IMR-90 (cell line): ENCODE measurements at regions of chr20 and their contacts with region 1.

Region 1: GRCh38 chr20:50165684-50166554 is 12.4 kb upstream of the PEDS1 start:
- DNase-seq: peak; percentile 100
- ATAC-seq: peak; percentile 89
- H3K4me3 ChIP-seq: peak overlapping the region; percentile 45
- H3K27ac ChIP-seq: peak overlapping the region; percentile 94
- H3K4me1 ChIP-seq: peaks cover 8% of the 10 kb centered on the region
- H3K27me3 ChIP-seq: no peaks in the 10 kb centered on the region
- CTCF ChIP-seq: no peak
- POLR2A ChIP-seq: peak; percentile 87
- RAD21 ChIP-seq: peak; percentile 13; the same call in 1 of the 2 replicates

Region 2: GRCh38 chr20:49982346-49983122 is 183.4 kb before region 1 on chr20 and contains the start of gene SNAI1:
- CTCF ChIA-PET with region 1: interaction called, 5 read pairs
- POLR2A ChIA-PET with region 1: no interaction called
- dilution Hi-C with region 1: no loop called
- in situ Hi-C with region 1: no loop called
- intact Hi-C with region 1: loop called (anchors 2 kb)
- DNase-seq: peak; percentile 86
- ATAC-seq: peak; percentile 79
- H3K4me3 ChIP-seq: peak within 1 kb of the TSS; percentile 92
- H3K27ac ChIP-seq: peak within 1 kb of the TSS; percentile 80
- H3K4me1 ChIP-seq: peaks cover 23% of the 10 kb centered on the region
- H3K27me3 ChIP-seq: no peaks in the 10 kb centered on the region
- CTCF ChIP-seq: peak; percentile 52
- POLR2A ChIP-seq: peak; percentile 99
- RAD21 ChIP-seq: peak; percentile 39
- total RNA-seq, gene SNAI1: 0.54 and 0.83 TPM in 2 replicates

Region 3: DNA sequence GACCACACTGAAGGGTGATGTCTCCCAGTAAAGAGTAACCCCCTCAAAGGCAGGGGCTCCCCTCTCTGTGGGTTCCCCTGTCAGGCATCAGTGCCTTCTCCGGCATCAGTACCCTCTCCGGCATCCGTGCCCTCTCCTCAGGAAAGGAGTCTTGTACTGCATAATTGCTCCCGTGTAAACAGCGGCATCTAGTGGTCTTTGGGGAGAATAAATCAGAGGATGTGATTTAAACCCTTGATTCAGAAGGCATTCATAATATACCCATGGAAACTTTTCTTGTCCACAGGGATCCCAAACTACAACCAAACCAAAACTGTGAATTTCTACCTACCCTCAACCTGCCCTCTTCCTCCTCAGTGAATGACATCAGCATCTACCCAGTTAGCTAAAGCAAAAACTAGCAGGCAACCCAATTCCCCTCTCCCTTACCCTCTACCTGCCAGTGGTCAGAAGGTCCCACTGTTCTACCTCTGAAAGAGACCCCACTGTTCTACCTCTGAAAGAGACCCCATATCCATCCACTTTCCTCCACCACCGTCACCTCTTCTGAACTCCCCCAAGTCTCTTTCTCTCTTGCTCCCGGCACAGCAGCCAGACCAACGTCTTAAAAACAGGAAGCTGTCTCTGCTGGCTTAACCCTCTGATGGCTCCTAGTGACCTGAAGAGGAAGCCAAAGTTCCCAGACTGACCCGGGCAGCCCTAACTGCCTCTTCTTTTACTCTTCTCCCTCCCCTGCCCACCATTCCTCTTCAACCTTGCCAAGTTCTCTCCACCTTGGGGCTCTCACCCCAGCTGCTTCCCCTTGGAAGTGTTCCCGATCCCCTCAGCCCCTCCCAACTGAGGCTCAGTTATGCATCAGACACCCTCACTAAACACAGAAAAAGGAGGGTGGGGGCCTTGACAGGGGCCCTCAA is 80.2 kb before region 1 on chr20:
- CTCF ChIA-PET with region 1: no interaction called
- POLR2A ChIA-PET with region 1: interaction called, 3 read pairs
- dilution Hi-C with region 1: no loop called
- in situ Hi-C with region 1: no loop called
- intact Hi-C with region 1: loop called (anchors 5 kb)
- DNase-seq: peak; percentile 73
- ATAC-seq: peak; percentile 89
- H3K4me3 ChIP-seq: no peak overlapping the region
- H3K27ac ChIP-seq: peak overlapping the region; percentile 8; the same call in 1 of the 2 replicates
- H3K4me1 ChIP-seq: peaks cover 17% of the 10 kb centered on the region
- H3K27me3 ChIP-seq: no peaks in the 10 kb centered on the region
- CTCF ChIP-seq: peak; percentile 84
- POLR2A ChIP-seq: no peak
- RAD21 ChIP-seq: peak; percentile 78

Region 4: GRCh38 chr20:50120897-50121693 is 44.8 kb before region 1 on chr20:
- CTCF ChIA-PET with region 1: interaction called, 19 read pairs
- POLR2A ChIA-PET with region 1: interaction called, 3 read pairs
- dilution Hi-C with region 1: no loop called
- in situ Hi-C with region 1: no loop called
- intact Hi-C with region 1: loop called (anchors 1 kb)
- DNase-seq: peak; percentile 65
- ATAC-seq: peak; percentile 74
- H3K4me3 ChIP-seq: no peak overlapping the region
- H3K27ac ChIP-seq: no peak overlapping the region
- H3K4me1 ChIP-seq: peaks cover 5% of the 10 kb centered on the region
- H3K27me3 ChIP-seq: no peaks in the 10 kb centered on the region
- CTCF ChIP-seq: peak; percentile 69
- POLR2A ChIP-seq: no peak
- RAD21 ChIP-seq: peak; percentile 88

Region 5: DNA sequence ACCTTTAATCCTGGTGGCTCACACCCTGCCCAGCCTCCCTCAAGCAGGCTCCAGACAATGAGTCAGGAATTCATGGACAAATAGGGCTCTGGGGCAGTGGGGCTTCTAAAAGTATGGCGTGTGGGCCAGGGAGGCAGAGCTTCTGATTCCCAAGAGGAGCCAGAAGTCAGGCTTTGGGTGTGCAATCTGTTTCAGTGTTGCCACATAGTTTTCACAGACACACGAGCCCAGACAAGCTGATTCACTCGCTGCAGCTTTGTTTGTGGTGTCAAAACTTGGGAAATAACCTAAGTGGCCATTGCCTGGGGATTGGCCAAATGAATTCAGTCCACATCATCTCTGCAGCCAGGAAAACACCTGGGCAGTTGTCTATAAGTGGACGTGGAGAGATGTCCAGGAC is 21.6 kb before region 1 on chr20:
- CTCF ChIA-PET with region 1: no interaction called
- POLR2A ChIA-PET with region 1: interaction called, 6 read pairs
- dilution Hi-C with region 1: no loop called
- in situ Hi-C with region 1: no loop called
- intact Hi-C with region 1: loop called (anchors 1 kb)
- DNase-seq: peak; percentile 99
- ATAC-seq: peak; percentile 86
- H3K4me3 ChIP-seq: no peak overlapping the region
- H3K27ac ChIP-seq: peak overlapping the region; percentile 50; the same call in 1 of the 2 replicates
- H3K4me1 ChIP-seq: peaks cover 30% of the 10 kb centered on the region
- H3K27me3 ChIP-seq: no peaks in the 10 kb centered on the region
- CTCF ChIP-seq: no peak
- POLR2A ChIP-seq: no peak; the same call in 1 of the 2 replicates
- RAD21 ChIP-seq: 0 out of 2 replicates have a peak, but pooled peaks have one; percentile 7

Region 6: GRCh38 chr20:50153485-50154377 is 12.2 kb before region 1 on chr20 and contains the start of gene PEDS1:
- CTCF ChIA-PET with region 1: no interaction called
- POLR2A ChIA-PET with region 1: no interaction called
- dilution Hi-C with region 1: no loop called
- in situ Hi-C with region 1: no loop called
- intact Hi-C with region 1: loop called (anchors 1 kb)
- DNase-seq: peak; percentile 90
- ATAC-seq: peak; percentile 98
- H3K4me3 ChIP-seq: peak within 1 kb of the TSS; percentile 87
- H3K27ac ChIP-seq: peak within 1 kb of the TSS; percentile 83
- H3K4me1 ChIP-seq: peaks cover 22% of the 10 kb centered on the region
- H3K27me3 ChIP-seq: no peaks in the 10 kb centered on the region
- CTCF ChIP-seq: no peak
- POLR2A ChIP-seq: peak; percentile 93
- RAD21 ChIP-seq: no peak
- total RNA-seq, gene PEDS1: 24.0 and 25.3 TPM in 2 replicates

Region 7: GRCh38 chr20:50237349-50238085 is 71.6 kb after region 1 on chr20:
- CTCF ChIA-PET with region 1: no interaction called
- POLR2A ChIA-PET with region 1: no interaction called
- dilution Hi-C with region 1: no loop called
- in situ Hi-C with region 1: no loop called
- intact Hi-C with region 1: no loop called
- DNase-seq: no peak
- ATAC-seq: no peak
- H3K4me3 ChIP-seq: no peak overlapping the region
- H3K27ac ChIP-seq: no peak overlapping the region
- H3K4me1 ChIP-seq: peaks cover 4% of the 10 kb centered on the region; the same call in 1 of the 2 replicates
- H3K27me3 ChIP-seq: no peaks in the 10 kb centered on the region
- CTCF ChIP-seq: no peak
- POLR2A ChIP-seq: no peak
- RAD21 ChIP-seq: no peak

Region 8: DNA sequence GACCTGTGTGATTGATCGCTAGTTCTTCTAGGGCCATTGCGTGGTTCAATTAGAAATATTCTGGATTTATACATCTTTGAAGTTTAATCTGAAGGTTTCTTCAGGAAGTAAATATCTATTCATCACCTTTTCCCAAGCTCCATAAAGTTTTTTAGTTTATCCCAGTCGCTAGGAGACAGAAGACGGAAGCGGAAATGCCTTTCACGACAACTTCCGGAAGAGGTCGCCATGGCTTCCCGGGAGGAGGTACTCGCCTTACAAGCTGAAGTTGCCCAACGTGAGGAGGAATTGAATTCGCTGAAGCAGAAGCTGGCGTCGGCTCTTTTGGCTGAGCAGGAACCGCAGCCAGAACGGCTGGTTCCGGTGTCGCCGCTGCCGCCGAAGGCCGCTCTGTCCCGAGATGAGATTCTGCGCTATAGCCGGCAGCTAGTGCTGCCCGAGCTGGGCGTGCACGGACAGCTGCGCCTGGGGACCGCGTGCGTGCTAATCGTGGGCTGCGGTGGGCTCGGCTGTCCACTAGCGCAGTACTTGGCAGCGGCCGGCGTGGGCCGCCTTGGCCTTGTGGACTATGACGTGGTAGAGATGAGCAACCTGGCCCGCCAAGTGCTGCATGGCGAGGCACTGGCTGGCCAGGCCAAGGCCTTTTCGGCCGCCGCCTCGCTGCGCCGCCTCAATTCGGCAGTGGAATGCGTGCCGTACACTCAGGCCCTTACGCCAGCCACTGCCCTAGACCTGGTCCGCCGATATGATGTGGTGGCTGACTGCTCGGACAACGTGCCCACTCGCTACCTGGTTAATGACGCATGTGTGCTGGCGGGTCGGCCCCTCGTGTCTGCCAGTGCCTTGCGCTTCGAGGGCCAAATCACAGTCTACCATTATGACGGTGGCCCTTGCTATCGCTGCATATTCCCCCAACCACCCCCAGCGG is 793.0 kb after region 1 on chr20 and contains the start of gene MOCS3:
- CTCF ChIA-PET with region 1: no interaction called
- POLR2A ChIA-PET with region 1: interaction called, 12 read pairs
- dilution Hi-C with region 1: no loop called
- in situ Hi-C with region 1: no loop called
- intact Hi-C with region 1: no loop called
- DNase-seq: peak; percentile 93
- ATAC-seq: peak; percentile 83
- H3K4me3 ChIP-seq: peak within 1 kb of the TSS; percentile 91
- H3K27ac ChIP-seq: peak within 1 kb of the TSS; percentile 93
- H3K4me1 ChIP-seq: peaks cover 10% of the 10 kb centered on the region
- H3K27me3 ChIP-seq: no peaks in the 10 kb centered on the region
- CTCF ChIP-seq: 0 out of 2 replicates have a peak, but pooled peaks have one; percentile 0
- POLR2A ChIP-seq: peak; percentile 78; the same call in 1 of the 2 replicates
- RAD21 ChIP-seq: no peak; the same call in 1 of the 2 replicates
- total RNA-seq, gene MOCS3: 9.9 and 11.4 TPM in 2 replicates